Panc1 (cell line): ENCODE measurements at regions of chr9 and their contacts with region 1.

Region 1: DNA sequence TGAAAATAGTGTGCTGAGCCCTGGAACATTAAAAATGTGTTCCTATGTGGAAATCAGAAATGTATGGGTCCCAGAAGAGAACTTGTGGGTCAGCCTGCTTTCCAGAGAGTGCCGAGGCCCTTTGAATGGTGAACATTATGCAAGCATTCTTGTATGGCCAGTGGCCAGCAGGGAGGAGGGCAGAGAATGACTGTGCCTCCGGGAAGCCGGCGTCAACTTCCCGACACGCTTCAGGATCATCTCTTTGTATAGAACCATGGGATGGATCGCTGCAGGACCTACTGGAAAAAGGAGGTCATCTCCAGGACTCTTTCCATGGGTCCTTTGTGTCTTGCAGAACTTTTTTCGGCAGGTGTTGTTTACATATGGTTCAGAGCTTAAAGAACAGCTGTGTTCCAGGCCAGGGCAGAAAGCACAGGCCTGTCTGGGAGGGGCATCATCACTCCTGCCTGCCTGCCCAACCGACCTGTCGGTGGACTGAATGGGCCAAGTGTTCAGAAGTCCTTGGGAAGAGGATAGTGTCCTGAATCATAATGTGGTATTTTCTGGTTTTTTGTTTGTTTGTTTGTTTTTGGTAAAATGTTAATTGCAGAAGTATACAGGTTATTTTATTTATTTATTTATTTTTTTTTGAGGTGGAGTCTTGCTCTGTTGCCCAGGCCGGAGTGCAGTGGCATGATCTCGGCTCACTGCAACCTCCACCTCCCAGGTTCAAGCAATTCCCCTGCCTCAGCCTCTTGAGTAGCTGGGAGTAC is 9.0 kb downstream of the PRRC2B start:
- DNase-seq: no peak
- ATAC-seq: peak; percentile 74
- H3K4me3 ChIP-seq: peak overlapping the region; percentile 11 to 41
- H3K27ac ChIP-seq: peak overlapping the region; percentile 79
- H3K4me1 ChIP-seq: peaks cover 74% of the 10 kb centered on the region
- H3K27me3 ChIP-seq: no peaks in the 10 kb centered on the region
- CTCF ChIP-seq: no peak

Region 2: DNA sequence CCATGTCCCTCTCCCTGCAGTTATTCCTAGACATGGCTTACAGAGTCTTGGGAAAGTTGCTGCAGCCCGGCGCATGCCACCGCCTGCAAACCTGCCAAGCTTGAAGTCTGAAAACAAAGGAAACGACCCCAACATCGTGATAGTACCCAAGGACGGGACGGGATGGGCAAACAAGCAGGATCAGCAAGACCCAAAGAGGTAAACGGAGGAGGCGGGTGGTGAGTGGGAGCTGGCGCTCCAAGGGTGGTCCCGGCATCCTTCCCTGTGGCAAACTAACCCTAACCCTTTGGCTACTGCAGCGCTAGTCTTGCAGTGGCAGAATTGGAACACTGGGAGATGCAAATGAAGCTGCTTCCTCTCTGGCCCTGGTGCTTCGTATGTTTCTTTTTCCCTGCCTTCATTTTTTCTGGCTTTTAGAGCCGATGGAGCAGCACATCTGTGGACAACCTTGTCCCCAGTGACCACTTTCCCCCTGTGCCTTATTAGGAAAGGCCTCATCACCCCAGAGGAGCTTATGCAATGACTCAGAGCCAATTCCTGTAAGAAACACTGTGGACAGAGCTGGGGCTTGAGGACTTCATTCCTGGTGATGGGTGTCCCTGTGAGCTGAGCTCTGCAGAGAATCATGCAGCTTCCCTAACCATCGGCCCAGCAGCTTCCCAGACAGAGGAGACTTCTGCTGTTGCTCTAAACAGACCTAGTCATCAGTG is 29.8 kb after region 1 on chr9:
- CTCF ChIA-PET with region 1: no interaction called
- POLR2A ChIA-PET with region 1: interaction called, 11 read pairs
- in situ Hi-C with region 1: no loop called
- intact Hi-C with region 1: no loop called
- DNase-seq: no peak
- ATAC-seq: no peak
- H3K4me3 ChIP-seq: no peak overlapping the region
- H3K27ac ChIP-seq: no peak overlapping the region
- H3K4me1 ChIP-seq: no peaks in the 10 kb centered on the region
- H3K27me3 ChIP-seq: no peaks in the 10 kb centered on the region
- CTCF ChIP-seq: no peak

Region 3: DNA sequence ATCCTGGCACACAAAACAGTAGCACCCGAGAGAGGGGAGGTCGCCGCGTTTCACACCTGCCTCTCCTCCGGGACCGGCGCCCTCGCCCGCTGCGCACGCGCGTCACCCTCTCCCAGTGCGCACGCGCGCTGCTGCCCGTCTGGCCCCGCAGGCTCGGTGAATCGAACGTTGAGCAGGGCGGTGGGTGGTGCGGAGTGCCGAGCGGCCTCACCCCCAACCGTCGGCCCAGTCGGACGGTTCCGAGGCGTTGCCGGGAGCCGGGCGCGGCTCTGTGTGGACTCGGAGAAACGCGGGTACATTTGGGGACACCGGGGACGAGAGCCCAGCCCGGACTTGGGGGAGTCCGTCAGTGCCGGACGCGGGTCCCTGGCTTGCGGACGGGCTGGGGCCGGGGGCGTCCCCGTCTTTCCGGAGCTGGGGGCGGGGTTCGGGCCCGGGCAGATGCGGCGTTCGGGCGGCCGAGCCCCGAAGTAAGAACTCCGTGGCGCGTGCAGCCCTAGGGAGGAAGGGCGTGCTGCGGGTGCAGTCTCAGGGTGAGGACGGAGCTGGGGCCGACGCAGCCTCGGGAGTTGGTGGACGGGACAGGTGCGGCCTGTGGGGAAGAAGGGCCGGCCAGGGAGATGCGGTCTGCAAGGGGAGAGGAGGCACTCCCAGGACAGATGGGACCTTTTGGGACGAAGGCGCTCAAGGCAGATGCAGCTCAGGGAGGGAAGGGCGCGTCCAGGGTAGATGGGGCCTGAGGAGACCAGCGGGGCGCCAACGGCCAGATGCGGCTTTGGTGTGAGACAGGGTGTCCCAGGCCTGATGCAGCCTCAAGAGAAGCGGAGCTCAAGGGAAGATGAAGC is 100.1 kb after region 1 on chr9 and contains the start of gene POMT1:
- CTCF ChIA-PET with region 1: no interaction called
- POLR2A ChIA-PET with region 1: no interaction called
- in situ Hi-C with region 1: no loop called
- intact Hi-C with region 1: no loop called
- DNase-seq: no peak
- ATAC-seq: peak; percentile 86
- H3K4me3 ChIP-seq: peak within 1 kb of the TSS; percentile 72 to 73
- H3K27ac ChIP-seq: peak within 1 kb of the TSS; percentile 76
- H3K4me1 ChIP-seq: peaks cover 17% of the 10 kb centered on the region
- H3K27me3 ChIP-seq: no peaks in the 10 kb centered on the region
- CTCF ChIP-seq: no peak
- total RNA-seq, gene POMT1: 58.0 TPM